Gastrocnemius medialis (tissue), 4 donors: ENCODE measurements at regions of chr5 and their contacts with region 1.

Region 1: DNA sequence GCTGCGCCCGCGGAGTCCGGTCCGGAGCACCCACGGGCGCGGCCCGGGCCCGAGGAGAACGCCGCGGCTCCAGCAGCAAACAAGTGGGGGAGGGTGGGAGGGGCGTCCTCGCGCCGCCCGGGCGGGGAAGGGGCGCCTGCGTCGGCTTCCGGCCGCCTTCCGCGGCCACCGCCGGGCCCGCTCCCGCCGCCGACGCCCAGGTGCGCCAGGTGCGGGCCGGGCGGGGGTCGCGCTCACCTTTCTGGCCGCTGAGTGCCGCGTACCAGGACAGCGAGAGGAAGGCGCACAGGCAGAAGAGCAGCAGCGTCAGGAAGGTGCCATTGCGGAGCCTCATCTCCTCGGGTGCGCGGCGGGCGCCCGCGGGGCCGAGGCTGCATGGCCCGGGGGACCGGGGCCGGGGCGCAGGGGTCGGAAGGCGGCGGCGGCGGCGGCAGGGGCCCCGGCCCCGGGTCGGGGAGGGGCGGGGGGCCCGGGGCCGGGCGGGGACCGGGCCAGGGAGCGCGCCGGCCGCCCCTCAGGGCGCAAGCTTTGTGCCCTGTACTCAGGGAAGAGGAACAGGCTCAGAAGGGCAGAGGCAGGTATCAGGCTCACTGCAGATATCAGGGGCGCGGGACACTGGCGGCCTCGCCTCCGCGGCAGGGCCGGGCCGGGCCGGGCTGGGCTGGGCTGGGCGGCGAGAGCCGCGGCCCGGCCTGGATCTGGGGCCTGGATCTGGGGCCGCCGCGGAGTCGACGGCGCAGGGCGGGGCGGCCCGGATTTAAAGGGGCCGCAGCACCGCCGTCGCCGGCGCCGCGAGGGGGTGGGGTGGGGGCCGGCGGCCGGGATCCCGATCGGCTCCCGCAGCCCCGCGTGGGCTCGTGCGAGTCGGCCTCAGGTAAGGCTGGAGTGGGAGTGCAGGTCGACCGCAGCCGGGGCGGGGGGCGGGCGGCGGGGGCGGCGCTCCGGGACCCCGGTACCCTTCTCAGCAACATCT is at the start of gene MGAT4B:
- DNase-seq: peak; percentile 56 to 69
- ATAC-seq: peak; percentile 72 to 76
- H3K4me3 ChIP-seq: peak within 1 kb of the TSS; percentile 75 to 95 (median 87)
- H3K27ac ChIP-seq: peak within 1 kb of the TSS; percentile 89 to 98 (median 94)
- H3K4me1 ChIP-seq: peaks cover 19 to 36% of the 10 kb centered on the region in 2 donors
- H3K27me3 ChIP-seq: no peaks in the 10 kb centered on the region
- CTCF ChIP-seq: no peak
- POLR2A ChIP-seq: peak; percentile 73
- total RNA-seq, gene MGAT4B: 28.3 to 86.0 (median 61.4) TPM

Region 2: GRCh38 chr5:179697993-179698934 is 108.3 kb before region 1 on chr5:
- in situ Hi-C with region 1: no loop called
- intact Hi-C with region 1: loop called (anchors 1 kb)
- DNase-seq: peak; percentile 99 to 100
- ATAC-seq: peak; percentile 90 to 96
- H3K4me3 ChIP-seq: peak overlapping the region; percentile 83 to 99 (median 88)
- H3K27ac ChIP-seq: peak overlapping the region; percentile 93 to 100 (median 98)
- H3K4me1 ChIP-seq: peaks cover 21 to 28% of the 10 kb centered on the region in 2 donors
- H3K27me3 ChIP-seq: no peaks in the 10 kb centered on the region
- CTCF ChIP-seq: no peak
- POLR2A ChIP-seq: peak; percentile 90 to 91

Region 3: DNA sequence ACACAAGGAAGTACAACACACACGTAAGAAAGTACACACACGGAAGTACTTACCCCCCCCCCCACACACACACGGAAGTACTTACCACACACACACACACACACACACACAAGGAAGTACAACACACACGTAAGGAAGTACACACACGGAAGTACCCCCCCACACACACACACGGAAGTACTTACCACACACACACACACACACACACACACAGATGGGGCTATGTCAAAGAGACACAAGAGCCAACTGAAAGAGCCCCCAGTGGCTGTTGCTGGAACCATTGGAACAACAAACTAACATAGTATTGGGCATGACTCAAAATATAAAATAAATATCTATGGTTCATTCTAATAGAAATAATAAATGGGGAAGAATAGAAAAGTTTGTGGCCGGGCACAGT is 490.2 kb after region 1 on chr5:
- in situ Hi-C with region 1: no loop called
- intact Hi-C with region 1: no loop called
- DNase-seq: no peak
- ATAC-seq: no peak
- H3K4me3 ChIP-seq: no peak overlapping the region
- H3K27ac ChIP-seq: no peak overlapping the region
- H3K4me1 ChIP-seq: peaks cover 5 to 8% of the 10 kb centered on the region in 2 donors
- H3K27me3 ChIP-seq: no peaks in the 10 kb centered on the region
- CTCF ChIP-seq: no peak
- POLR2A ChIP-seq: no peak